ENCODE measurements at regions of chrX and their contacts with region 1.

Region 1: DNA sequence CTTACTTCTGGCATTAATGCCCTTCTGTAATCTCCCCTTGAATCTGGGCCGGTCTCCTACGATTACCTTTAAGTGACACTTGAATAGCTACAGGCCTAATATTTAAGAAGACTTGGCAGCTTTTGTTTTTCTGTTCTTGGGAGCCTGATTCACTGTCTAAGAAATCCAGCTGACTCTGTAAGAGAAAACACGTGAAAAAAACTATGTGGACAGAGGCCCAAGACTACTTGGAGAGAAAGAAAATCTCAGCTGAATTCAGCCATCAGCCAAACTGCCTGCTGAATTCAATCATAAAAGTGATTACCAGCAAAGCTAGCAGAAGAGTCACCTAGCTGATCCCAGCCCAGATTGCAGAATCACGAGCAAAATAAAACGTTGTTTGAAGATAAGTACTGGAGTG is 521.2 kb downstream of the MID1IP1 start:
- DNase-seq: no peak
- H3K4me3 Mint-ChIP-seq: no peak overlapping the region
- H3K27ac Mint-ChIP-seq: no peak overlapping the region
- H3K4me1 Mint-ChIP-seq: peaks cover 23% of the 10 kb centered on the region
- H3K27me3 Mint-ChIP-seq: no peaks in the 10 kb centered on the region

Region 2: DNA sequence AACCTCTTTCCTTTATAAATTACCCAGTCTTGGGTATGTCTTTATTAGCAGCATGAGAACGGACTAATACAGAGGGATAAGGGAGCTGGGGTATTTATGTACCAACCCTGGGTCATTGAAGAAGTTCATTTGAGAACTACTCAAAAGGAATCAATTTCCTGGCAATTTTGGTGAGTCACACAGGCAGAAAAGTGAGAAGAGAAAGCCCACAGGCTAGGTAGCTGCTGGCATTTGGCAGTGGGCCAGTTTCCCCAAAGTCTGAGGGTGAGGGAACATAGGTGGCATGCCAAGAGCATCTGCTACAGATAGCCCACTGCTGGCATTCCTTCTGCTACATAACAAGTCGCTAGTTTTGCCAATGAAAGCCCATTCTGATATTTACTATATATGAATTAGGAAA is 110.0 kb before region 1 on chrX:
- CTCF ChIA-PET with region 1: no interaction called
- POLR2A ChIA-PET with region 1: no interaction called
- DNase-seq: no peak
- H3K4me3 Mint-ChIP-seq: no peak overlapping the region
- H3K27ac Mint-ChIP-seq: no peak overlapping the region
- H3K4me1 Mint-ChIP-seq: no peaks in the 10 kb centered on the region
- H3K27me3 Mint-ChIP-seq: no peaks in the 10 kb centered on the region

Region 3: DNA sequence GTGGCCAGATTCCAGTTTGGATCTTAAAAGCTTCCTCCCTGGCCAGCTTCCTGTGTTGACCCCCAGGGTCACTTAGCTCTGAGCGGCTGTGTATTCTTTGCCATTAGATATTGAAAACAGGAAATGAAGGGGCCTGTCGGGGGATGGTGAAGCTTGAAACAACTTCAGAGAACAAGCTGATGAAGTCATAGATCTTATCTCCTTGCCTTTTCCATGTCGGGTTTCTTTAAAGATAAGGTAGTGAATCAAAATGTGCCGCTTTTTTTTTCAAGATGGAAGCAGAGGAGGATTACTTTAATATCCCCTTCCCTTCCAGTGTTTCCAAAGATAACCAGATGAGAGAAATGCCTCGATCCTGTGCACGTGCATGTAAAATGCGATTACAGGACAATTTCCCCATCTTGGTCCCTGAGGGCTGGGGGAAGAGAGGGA is 12.8 kb before region 1 on chrX:
- CTCF ChIA-PET with region 1: interaction called, 12 read pairs
- POLR2A ChIA-PET with region 1: no interaction called
- DNase-seq: peak; percentile 61
- H3K4me3 Mint-ChIP-seq: peak overlapping the region; percentile 51
- H3K27ac Mint-ChIP-seq: peak overlapping the region; percentile 96
- H3K4me1 Mint-ChIP-seq: peaks cover 40% of the 10 kb centered on the region
- H3K27me3 Mint-ChIP-seq: no peaks in the 10 kb centered on the region

Region 4: GRCh38 chrX:39398963-39399261 is 76.4 kb after region 1 on chrX:
- CTCF ChIA-PET with region 1: no interaction called
- POLR2A ChIA-PET with region 1: no interaction called
- DNase-seq: no peak
- H3K4me3 Mint-ChIP-seq: no peak overlapping the region
- H3K27ac Mint-ChIP-seq: no peak overlapping the region
- H3K4me1 Mint-ChIP-seq: no peaks in the 10 kb centered on the region
- H3K27me3 Mint-ChIP-seq: no peaks in the 10 kb centered on the region

Measured in activated CD4-positive, alpha-beta T cell treated with anti-CD3 and anti-CD28 coated beads, Interleukin-2, amount 10 ng/mL, durations not matched to agents 7 days and 5 days (primary cell).